ENCODE measurements at regions of chr17 and their contacts with region 1.

Region 1: GRCh38 chr17:78736526-78737079 is 45.5 kb downstream of the CYTH1 start:
- DNase-seq: no peak
- ATAC-seq: peak; percentile 77
- H3K4me3 ChIP-seq: peak overlapping the region; percentile 84
- H3K27ac ChIP-seq: peak overlapping the region; percentile 92
- H3K4me1 ChIP-seq: peaks cover 49% of the 10 kb centered on the region
- H3K27me3 ChIP-seq: no peaks in the 10 kb centered on the region
- CTCF ChIP-seq: peak in 2 of 3 experiments; percentile 12 to 23; a peak in 2 of 6 replicates
- EP300 ChIP-seq: no peak
- POLR2A ChIP-seq: peak; percentile 78
- RAD21 ChIP-seq: no peak

Region 2: DNA sequence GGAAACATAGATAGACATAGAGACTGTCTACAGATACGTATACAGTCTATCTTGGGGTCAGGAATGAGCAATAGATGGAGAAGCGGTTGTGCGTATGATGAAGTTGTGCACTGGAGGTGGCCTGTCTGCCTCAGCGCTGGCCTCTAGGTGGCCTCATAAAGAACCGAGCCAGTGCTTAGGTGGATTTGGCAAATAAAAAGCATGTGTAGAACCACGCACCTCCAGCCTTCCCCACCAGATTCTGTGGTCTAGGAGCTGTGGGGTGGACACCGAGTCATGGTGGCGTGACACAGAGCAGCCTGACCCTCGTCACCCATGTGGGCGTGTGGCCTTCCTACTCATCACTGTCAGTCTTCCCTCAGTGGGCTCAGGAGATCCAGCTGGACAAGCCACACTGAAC is 324.2 kb before region 1 on chr17:
- CTCF ChIA-PET with region 1: no interaction called
- POLR2A ChIA-PET with region 1: no interaction called
- RAD21 ChIA-PET with region 1: no interaction called
- SMC1A ChIA-PET with region 1: no interaction called
- in situ Hi-C with region 1: no loop called
- intact Hi-C with region 1: no loop called
- DNase-seq: no peak
- ATAC-seq: peak; percentile 59
- H3K4me3 ChIP-seq: no peak overlapping the region
- H3K27ac ChIP-seq: no peak overlapping the region
- H3K4me1 ChIP-seq: peaks cover 6% of the 10 kb centered on the region
- H3K27me3 ChIP-seq: no peaks in the 10 kb centered on the region
- CTCF ChIP-seq: peak in 2 of 3 experiments; percentile 6 to 44; a peak in 3 of 6 replicates
- EP300 ChIP-seq: no peak
- POLR2A ChIP-seq: no peak; the same call in none of the 2 replicates
- RAD21 ChIP-seq: no peak

Region 3: DNA sequence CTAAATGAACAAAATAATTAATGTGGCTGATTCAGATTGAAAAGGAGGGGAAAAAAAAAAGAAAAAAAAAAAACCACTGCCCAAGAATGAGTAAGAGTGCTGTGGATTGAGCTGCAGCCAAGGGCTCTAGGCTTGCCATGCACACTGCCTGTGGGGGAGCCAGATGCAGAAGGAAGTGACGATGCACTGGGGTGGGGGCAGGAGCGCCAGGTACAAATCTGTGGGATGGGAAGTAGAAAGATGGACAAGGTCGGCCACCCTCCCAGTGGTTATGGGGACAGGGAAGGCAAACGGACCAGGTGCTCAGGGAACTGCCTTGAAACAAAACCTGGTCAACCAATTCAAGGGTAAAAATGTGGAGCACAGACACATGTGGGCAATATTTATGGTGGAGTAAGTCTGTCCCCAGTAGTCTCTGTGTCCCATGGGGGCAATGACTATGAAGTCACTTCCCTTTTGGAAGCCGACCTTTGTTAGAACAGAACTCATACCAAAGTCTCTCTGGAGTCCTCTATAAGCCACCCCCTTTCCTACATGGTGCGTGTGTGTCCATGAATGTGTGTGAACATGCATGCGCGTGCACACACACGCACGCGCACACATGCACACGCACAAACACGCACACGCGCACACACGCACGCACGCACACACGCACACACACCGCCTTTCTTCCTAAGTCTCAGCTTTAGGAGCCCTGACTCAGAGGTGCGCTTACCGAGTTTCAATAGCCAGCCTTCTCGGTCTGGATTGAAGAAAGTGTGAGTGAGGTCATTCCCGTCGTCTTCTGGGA is 38.9 kb before region 1 on chr17:
- CTCF ChIA-PET with region 1: interaction called, 6 read pairs
- POLR2A ChIA-PET with region 1: interaction called, 13 read pairs
- RAD21 ChIA-PET with region 1: interaction called, 12 read pairs
- SMC1A ChIA-PET with region 1: interaction called, 7 read pairs
- in situ Hi-C with region 1: no loop called
- intact Hi-C with region 1: no loop called
- DNase-seq: no peak
- ATAC-seq: peak; percentile 67
- H3K4me3 ChIP-seq: peak overlapping the region; percentile 25; the same call in 1 of the 2 replicates
- H3K27ac ChIP-seq: peak overlapping the region; percentile 97
- H3K4me1 ChIP-seq: peaks cover 55% of the 10 kb centered on the region
- H3K27me3 ChIP-seq: no peaks in the 10 kb centered on the region
- CTCF ChIP-seq: no peak
- EP300 ChIP-seq: no peak
- POLR2A ChIP-seq: peak; percentile 66
- RAD21 ChIP-seq: no peak

Region 4: DNA sequence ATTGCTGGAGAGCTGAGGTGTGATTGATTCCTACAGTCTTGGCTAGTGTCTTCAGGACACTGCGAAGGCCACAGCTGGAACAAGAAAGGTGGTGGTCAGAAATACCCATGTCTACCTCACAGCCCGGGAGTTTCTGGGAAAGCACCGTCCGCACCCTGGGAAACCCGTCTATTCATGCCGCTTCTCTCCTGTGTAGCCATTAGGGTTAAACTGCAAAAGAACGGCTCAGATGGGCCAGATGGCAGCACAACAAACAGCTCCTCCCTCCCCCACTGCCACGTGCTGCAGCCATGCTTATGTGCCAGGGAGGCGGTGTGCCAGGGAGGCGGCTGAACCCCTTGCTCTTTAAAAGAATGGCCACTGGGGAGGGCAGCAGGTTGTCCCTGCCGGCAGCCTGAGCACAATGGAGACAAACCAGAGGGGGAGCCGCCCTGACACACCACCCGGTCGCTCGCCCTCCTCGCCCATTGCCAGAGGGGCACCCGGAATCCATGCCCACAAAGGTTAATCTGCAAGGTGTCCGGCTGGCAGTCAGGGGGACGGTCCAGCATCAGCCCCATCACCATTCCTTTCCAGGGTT is 19.7 kb before region 1 on chr17:
- CTCF ChIA-PET with region 1: interaction called, 85 read pairs
- POLR2A ChIA-PET with region 1: interaction called, 384 read pairs
- RAD21 ChIA-PET with region 1: interaction called, 537 read pairs
- SMC1A ChIA-PET with region 1: interaction called, 490 read pairs
- in situ Hi-C with region 1: no loop called
- intact Hi-C with region 1: no loop called
- DNase-seq: no peak
- ATAC-seq: peak; percentile 63
- H3K4me3 ChIP-seq: peak overlapping the region; percentile 37
- H3K27ac ChIP-seq: peak overlapping the region; percentile 87
- H3K4me1 ChIP-seq: peaks cover 63% of the 10 kb centered on the region
- H3K27me3 ChIP-seq: no peaks in the 10 kb centered on the region
- CTCF ChIP-seq: no peak
- EP300 ChIP-seq: no peak
- POLR2A ChIP-seq: peak; percentile 26
- RAD21 ChIP-seq: no peak

Region 5: DNA sequence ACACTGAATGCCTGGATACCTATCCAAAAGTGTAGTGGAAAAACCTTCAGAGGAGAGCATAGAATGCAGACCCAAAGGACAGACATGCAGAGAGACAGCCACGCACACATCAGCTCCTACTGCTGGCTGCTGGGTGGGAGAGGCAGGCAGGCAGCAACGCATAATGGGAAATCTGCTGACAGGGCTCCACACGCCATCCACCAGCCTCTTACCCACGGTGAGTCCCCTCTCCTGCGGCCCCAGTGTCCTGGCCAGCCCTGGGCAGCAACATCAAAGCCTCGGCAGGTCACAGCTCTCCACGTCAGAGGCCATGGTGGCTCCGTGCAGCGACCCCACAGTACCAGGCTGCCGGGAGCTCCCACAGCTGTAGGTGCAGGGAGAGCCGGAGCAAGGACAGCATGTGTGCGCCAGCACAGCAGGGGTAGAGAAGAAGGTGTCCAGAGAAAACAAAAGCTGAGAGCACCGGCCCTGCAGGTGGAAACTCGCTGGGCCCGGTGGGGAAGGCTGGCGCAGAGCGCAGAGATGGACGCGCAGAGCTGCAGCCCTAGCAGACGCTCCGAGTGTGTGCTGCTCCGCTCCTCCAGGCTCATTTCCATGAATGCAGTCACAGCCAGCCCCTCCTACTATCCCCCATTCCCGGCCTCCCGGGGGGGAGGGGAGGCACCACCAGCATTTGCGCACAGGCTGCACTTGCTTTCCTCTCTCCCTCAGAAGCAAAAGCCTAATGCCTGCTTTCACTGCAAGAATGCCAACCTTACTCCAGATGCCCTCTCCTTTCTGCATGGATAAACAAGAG is 13.4 kb before region 1 on chr17:
- CTCF ChIA-PET with region 1: interaction called, 78 read pairs
- POLR2A ChIA-PET with region 1: interaction called, 384 read pairs
- RAD21 ChIA-PET with region 1: interaction called, 537 read pairs
- SMC1A ChIA-PET with region 1: interaction called, 490 read pairs
- in situ Hi-C with region 1: no loop called
- intact Hi-C with region 1: no loop called
- DNase-seq: no peak
- ATAC-seq: no peak
- H3K4me3 ChIP-seq: peak overlapping the region; percentile 56
- H3K27ac ChIP-seq: peak overlapping the region; percentile 74
- H3K4me1 ChIP-seq: peaks cover 90% of the 10 kb centered on the region
- H3K27me3 ChIP-seq: no peaks in the 10 kb centered on the region
- CTCF ChIP-seq: no peak
- EP300 ChIP-seq: no peak
- POLR2A ChIP-seq: peak; percentile 30; the same call in 1 of the 2 replicates
- RAD21 ChIP-seq: no peak

Region 6: DNA sequence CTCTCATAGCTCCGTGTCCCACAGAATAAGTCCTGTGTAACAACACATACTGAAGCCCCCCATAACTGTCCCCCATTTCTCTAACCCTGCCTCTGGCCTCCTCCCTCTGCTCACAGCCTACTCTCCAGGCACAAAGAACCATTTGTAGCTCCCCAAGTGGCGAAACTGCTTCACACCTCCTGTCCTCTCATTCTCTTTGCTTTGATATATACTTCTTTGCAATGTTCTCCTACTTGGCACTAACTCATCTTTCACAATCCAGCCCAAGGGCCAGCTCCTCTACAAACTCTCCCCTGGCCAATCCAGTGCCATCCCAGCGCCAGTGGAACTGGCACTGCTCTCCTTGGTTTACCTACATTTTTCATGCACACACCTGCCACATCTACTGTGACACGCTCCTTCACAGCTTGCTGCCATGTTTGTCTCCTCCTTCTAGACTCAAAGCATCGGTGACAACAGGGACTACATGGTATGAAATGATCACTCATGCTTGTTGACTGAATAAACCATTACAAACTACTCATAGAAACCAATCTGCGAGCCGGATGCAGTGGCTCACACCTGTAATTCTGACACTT is 32.7 kb after region 1 on chr17:
- CTCF ChIA-PET with region 1: interaction called, 76 read pairs
- POLR2A ChIA-PET with region 1: interaction called, 131 read pairs
- RAD21 ChIA-PET with region 1: interaction called, 32 read pairs
- SMC1A ChIA-PET with region 1: interaction called, 14 read pairs
- in situ Hi-C with region 1: no loop called
- intact Hi-C with region 1: no loop called
- DNase-seq: no peak
- ATAC-seq: peak; percentile 54
- H3K4me3 ChIP-seq: no peak overlapping the region
- H3K27ac ChIP-seq: peak overlapping the region; percentile 53
- H3K4me1 ChIP-seq: peaks cover 66% of the 10 kb centered on the region
- H3K27me3 ChIP-seq: no peaks in the 10 kb centered on the region
- CTCF ChIP-seq: peak; percentile 36 to 45 (median 45)
- EP300 ChIP-seq: no peak
- POLR2A ChIP-seq: peak; percentile 54; the same call in 1 of the 2 replicates
- RAD21 ChIP-seq: 0 out of 2 replicates have a peak, but pooled peaks have one; percentile 20

Region 7: GRCh38 chr17:78774956-78775571 is 38.5 kb after region 1 on chr17:
- CTCF ChIA-PET with region 1: interaction called, 76 read pairs
- POLR2A ChIA-PET with region 1: interaction called, 131 read pairs
- RAD21 ChIA-PET with region 1: interaction called, 32 read pairs
- SMC1A ChIA-PET with region 1: interaction called, 21 read pairs
- in situ Hi-C with region 1: no loop called
- intact Hi-C with region 1: loop called (anchors 2 kb)
- DNase-seq: no peak
- ATAC-seq: peak; percentile 69
- H3K4me3 ChIP-seq: peak overlapping the region; percentile 68
- H3K27ac ChIP-seq: peak overlapping the region; percentile 97
- H3K4me1 ChIP-seq: peaks cover 43% of the 10 kb centered on the region
- H3K27me3 ChIP-seq: no peaks in the 10 kb centered on the region
- CTCF ChIP-seq: no peak
- EP300 ChIP-seq: peak in 1 of 2 experiments; percentile 44; a peak in 2 of 4 replicates
- POLR2A ChIP-seq: peak; percentile 81
- RAD21 ChIP-seq: no peak

Region 8: DNA sequence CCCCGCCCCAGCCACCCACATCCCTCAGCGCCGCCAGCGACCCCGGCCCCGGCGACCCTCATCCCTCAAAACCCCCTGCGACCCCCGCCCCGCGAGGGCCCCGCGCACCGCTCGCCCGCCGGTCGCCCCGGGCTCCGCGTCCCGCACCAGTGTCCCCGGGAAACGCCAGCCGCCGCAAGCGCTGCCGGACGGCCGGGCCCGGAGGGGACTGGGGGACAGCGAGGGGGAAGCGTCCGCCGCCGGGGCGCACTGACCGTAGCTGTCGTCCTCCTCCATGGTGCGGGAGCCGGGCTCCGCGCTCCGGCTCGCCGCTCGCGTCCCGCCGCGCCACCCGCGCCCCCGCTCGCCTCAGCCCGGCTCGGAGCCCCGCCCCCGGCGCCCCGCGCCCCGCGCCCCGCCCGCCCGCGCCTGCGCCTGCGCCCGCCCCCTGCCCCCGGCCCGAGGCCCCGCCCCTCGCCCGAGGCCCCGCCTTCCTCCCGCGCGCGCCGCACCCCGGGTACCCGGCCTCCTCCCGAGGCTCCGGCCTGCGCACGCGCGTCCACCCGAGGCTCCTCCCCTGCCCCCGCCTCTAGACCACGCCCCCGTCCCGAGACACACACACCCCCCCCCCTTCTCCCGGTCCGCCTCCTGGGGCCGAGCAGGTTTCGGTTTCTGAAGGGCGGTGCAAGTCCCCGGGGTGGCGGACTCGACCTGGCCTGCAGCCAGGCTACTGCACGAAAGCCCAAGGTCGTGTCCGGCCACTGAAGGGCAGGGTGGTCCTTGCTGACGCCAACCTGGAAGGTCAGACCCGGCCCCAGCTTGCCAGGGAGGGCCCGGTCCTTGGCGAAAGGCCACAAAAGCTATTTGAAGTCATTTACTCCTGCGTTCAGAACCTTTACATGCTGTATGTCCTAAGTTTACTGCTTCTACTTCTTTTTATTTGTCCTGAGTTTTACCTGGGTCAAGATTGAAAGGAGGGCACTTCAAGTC is 45.6 kb after region 1 on chr17 and contains the start of gene CYTH1:
- CTCF ChIA-PET with region 1: interaction called, 7 read pairs
- POLR2A ChIA-PET with region 1: interaction called, 11 read pairs
- RAD21 ChIA-PET with region 1: interaction called, 19 read pairs
- SMC1A ChIA-PET with region 1: interaction called, 21 read pairs
- in situ Hi-C with region 1: no loop called
- intact Hi-C with region 1: loop called (anchors 2 kb)
- DNase-seq: no peak
- ATAC-seq: peak; percentile 54
- H3K4me3 ChIP-seq: peak within 1 kb of the TSS; percentile 89
- H3K27ac ChIP-seq: peak within 1 kb of the TSS; percentile 97
- H3K4me1 ChIP-seq: peaks cover 6% of the 10 kb centered on the region; the same call in 1 of the 2 replicates
- H3K27me3 ChIP-seq: no peaks in the 10 kb centered on the region
- CTCF ChIP-seq: no peak
- EP300 ChIP-seq: no peak
- POLR2A ChIP-seq: peak; percentile 85
- RAD21 ChIP-seq: 0 out of 2 replicates have a peak, but pooled peaks have one; percentile 1
- polyA plus RNA-seq, gene CYTH1: 6.6 to 11.8 TPM

Region 9: GRCh38 chr17:78862073-78863023 is 125.7 kb after region 1 on chr17:
- CTCF ChIA-PET with region 1: no interaction called
- POLR2A ChIA-PET with region 1: no interaction called
- RAD21 ChIA-PET with region 1: no interaction called
- SMC1A ChIA-PET with region 1: no interaction called
- in situ Hi-C with region 1: no loop called
- intact Hi-C with region 1: no loop called
- DNase-seq: no peak
- ATAC-seq: no peak
- H3K4me3 ChIP-seq: no peak overlapping the region
- H3K27ac ChIP-seq: no peak overlapping the region
- H3K4me1 ChIP-seq: no peaks in the 10 kb centered on the region
- H3K27me3 ChIP-seq: 0 out of 4 replicates have a peak, but pooled peaks cover 0 to 1% of the 10 kb centered on the region in 2 experiments
- CTCF ChIP-seq: no peak
- EP300 ChIP-seq: no peak
- POLR2A ChIP-seq: no peak
- RAD21 ChIP-seq: no peak

Region 10: GRCh38 chr17:78903101-78903779 is 166.6 kb after region 1 on chr17 and contains the start of gene CEP295NL:
- CTCF ChIA-PET with region 1: no interaction called
- POLR2A ChIA-PET with region 1: no interaction called
- RAD21 ChIA-PET with region 1: no interaction called
- SMC1A ChIA-PET with region 1: no interaction called
- in situ Hi-C with region 1: no loop called
- intact Hi-C with region 1: no loop called
- DNase-seq: no peak
- ATAC-seq: peak; percentile 61
- H3K4me3 ChIP-seq: no peak within 1 kb of the TSS
- H3K27ac ChIP-seq: no peak within 1 kb of the TSS
- H3K4me1 ChIP-seq: no peaks in the 10 kb centered on the region
- H3K27me3 ChIP-seq: 0 out of 4 replicates have a peak, but pooled peaks cover 0 to 2% of the 10 kb centered on the region in 2 experiments
- CTCF ChIP-seq: no peak
- EP300 ChIP-seq: no peak
- POLR2A ChIP-seq: no peak
- RAD21 ChIP-seq: no peak
- polyA plus RNA-seq, gene CEP295NL: not detected

Measured in GM12878 (cell line).